HAP-1 (cell line): ENCODE measurements at regions of chr14 and their contacts with region 1.

Region 1: GRCh38 chr14:77139540-77140358 is 1.8 kb downstream of the ZDHHC22 start:
- DNase-seq: peak; percentile 56 to 82
- H3K4me3 ChIP-seq: peak overlapping the region; percentile 28
- H3K4me1 ChIP-seq: peaks cover 15% of the 10 kb centered on the region
- H3K27me3 ChIP-seq: peaks cover 36% of the 10 kb centered on the region

Region 2: DNA sequence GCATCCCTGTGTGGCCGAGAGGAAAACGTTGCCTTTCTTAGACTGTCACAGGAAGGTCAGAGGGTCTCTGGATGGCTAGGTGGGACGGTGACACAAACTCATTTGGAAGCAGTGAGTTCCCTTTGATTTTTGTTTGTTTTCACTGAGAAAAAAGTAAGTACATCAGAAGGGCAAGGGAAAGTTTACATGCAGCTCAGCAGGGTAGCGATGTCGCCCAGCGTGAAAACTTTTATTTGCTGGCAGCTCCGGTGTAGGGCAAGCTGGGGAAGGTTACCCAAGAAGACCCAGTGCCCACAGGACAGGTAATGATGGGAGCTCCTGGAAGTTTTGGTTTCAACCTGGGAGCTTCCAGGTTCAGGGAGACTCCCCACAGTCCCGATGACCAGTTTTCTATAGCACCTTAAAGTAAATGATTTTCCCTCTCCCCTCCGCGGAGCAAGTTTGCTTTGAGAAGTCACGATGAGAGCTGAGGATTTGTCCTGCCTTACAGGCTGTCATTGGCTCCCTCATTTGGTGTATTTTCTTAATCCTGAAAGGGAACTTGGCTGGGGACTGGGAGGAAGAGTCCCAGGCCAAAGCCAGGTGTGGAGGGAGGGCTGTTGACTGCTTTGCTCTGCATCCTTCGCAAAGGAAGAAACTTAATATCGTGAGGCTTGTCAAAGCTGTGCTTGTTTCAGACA is 828.5 kb before region 1 on chr14:
- in situ Hi-C with region 1: no loop called
- DNase-seq: no peak
- H3K4me3 ChIP-seq: no peak overlapping the region
- H3K4me1 ChIP-seq: peaks cover 3% of the 10 kb centered on the region; the same call in 1 of the 2 replicates
- H3K27me3 ChIP-seq: no peaks in the 10 kb centered on the region

Region 3: DNA sequence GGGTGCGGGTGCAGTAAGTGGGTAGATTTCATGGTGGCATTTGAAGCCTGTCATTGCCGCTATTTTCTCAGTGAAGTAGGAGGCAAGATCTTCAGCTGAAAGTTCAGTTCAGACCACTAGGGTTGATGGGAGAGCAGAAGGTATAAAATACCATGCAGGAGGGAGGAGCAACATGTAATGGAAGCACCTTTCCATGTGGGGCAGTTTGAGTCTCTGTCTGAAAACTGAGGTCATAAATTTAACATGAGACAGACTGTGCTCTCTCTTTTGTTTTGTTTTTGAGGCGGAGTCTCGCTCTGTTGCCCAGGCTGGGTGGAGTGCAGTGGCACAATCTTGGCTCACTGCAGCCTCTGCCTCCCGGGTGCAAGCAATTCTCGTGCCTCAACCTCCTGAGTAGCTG is 290.9 kb before region 1 on chr14:
- in situ Hi-C with region 1: no loop called
- DNase-seq: no peak
- H3K4me3 ChIP-seq: no peak overlapping the region
- H3K4me1 ChIP-seq: no peaks in the 10 kb centered on the region
- H3K27me3 ChIP-seq: peaks cover under 1% of the 10 kb centered on the region; the same call in 1 of the 2 replicates

Region 4: GRCh38 chr14:77268989-77269600 is 129.3 kb after region 1 on chr14:
- in situ Hi-C with region 1: no loop called
- DNase-seq: no peak
- H3K4me3 ChIP-seq: no peak overlapping the region
- H3K4me1 ChIP-seq: no peaks in the 10 kb centered on the region
- H3K27me3 ChIP-seq: peaks cover 20% of the 10 kb centered on the region

Region 5: GRCh38 chr14:77314043-77314442 is 174.3 kb after region 1 on chr14:
- in situ Hi-C with region 1: loop called (anchors 10 kb)
- DNase-seq: no peak
- H3K4me3 ChIP-seq: no peak overlapping the region
- H3K4me1 ChIP-seq: peaks cover 15% of the 10 kb centered on the region
- H3K27me3 ChIP-seq: no peaks in the 10 kb centered on the region

Region 6: DNA sequence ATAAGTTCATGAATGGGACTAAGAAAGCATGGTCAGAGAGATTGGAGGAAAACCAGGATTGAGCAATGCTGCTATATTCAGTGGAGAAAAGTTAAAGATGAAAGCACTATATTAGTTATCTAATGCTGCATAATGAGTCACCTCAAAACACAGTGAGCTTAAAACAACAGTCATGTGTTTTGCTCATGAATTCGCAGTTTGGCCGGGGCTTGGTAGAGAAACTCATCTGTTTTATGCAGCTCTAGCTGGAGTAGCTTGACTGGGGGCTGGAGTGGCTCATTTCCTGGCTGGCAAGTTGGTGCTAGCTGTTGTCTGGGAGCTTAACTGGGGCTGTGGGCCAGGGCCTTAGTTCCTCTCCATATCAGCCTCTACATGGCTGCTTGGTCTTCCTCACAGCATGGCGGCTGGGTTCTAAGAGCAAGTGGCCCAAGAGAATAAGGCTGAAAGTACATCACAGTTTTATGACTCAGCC is 750.3 kb after region 1 on chr14:
- in situ Hi-C with region 1: no loop called
- DNase-seq: no peak
- H3K4me3 ChIP-seq: no peak overlapping the region
- H3K4me1 ChIP-seq: no peaks in the 10 kb centered on the region
- H3K27me3 ChIP-seq: no peaks in the 10 kb centered on the region